Esophagus squamous epithelium (tissue), 5 donors: ENCODE measurements at regions of chr1 and their contacts with region 1.

Region 1: GRCh38 chr1:209583408-209583807 is at the start of gene CAMK1G:
- DNase-seq: no peak
- H3K4me3 ChIP-seq: no peak within 1 kb of the TSS
- H3K27ac ChIP-seq: no peak within 1 kb of the TSS
- H3K4me1 ChIP-seq: peaks cover 7 to 21% (median 8%) of the 10 kb centered on the region in 3 donors
- H3K27me3 ChIP-seq: peaks cover 0 to 88% (median 3%) of the 10 kb centered on the region in 4 donors
- CTCF ChIP-seq: no peak
- POLR2A ChIP-seq: no peak
- total RNA-seq, gene CAMK1G: 0.19 TPM in 1 of 4 donors, not detected in the others

Region 2: GRCh38 chr1:209241487-209241886 is 341.9 kb before region 1 on chr1:
- intact Hi-C with region 1: no loop called
- DNase-seq: no peak
- H3K4me3 ChIP-seq: no peak overlapping the region
- H3K27ac ChIP-seq: no peak overlapping the region
- H3K4me1 ChIP-seq: no peaks in the 10 kb centered on the region
- H3K27me3 ChIP-seq: peaks cover 0 to 12% (median 0%) of the 10 kb centered on the region in 4 donors
- CTCF ChIP-seq: no peak
- POLR2A ChIP-seq: no peak

Region 3: GRCh38 chr1:209688746-209689234 is 105.4 kb after region 1 on chr1:
- intact Hi-C with region 1: loop called (anchors 5 kb)
- DNase-seq: no peak
- H3K4me3 ChIP-seq: no peak overlapping the region
- H3K27ac ChIP-seq: no peak overlapping the region
- H3K4me1 ChIP-seq: peaks cover 0 to 39% (median 7%) of the 10 kb centered on the region in 3 donors
- H3K27me3 ChIP-seq: no peaks in the 10 kb centered on the region
- CTCF ChIP-seq: no peak
- POLR2A ChIP-seq: no peak

Region 4: GRCh38 chr1:209747580-209748262 is 164.3 kb after region 1 on chr1:
- intact Hi-C with region 1: loop called (anchors 5 kb)
- DNase-seq: peak; percentile 63
- H3K4me3 ChIP-seq: peak overlapping the region in 3 of 4 donors; percentile 26 to 54 (median 31)
- H3K27ac ChIP-seq: peak overlapping the region; percentile 39 to 66 (median 63)
- H3K4me1 ChIP-seq: peaks cover 4 to 35% (median 10%) of the 10 kb centered on the region in 3 donors
- H3K27me3 ChIP-seq: no peaks in the 10 kb centered on the region
- CTCF ChIP-seq: peak; percentile 94 to 99 (median 98)
- POLR2A ChIP-seq: peak in 1 of 4 donors; percentile 4